ENCODE measurements at regions of chr15 and their contacts with region 1.

Region 1: DNA sequence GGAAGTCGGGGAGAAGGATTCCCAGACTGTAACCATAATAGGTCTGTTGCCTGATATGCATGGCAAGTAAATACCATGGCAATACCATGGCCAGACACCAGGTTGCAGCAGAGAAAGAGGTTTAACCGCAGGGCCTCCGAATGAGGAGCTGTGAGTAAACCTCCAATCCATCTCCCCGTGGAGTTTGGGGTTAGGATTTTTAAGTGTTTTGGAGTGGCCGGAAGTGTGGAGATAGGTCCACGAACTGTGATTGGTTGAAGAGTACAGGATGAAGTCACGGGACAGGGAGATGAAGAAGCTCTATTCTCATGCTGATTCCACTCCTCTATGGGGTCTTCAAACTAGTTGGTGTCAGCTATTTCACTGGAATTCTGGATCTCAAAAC is 127.9 kb downstream of the ST8SIA2 start:
- DNase-seq: peak; percentile 65
- H3K4me3 ChIP-seq: no peak overlapping the region
- H3K27ac ChIP-seq: no peak overlapping the region
- H3K4me1 ChIP-seq: no peaks in the 10 kb centered on the region
- H3K27me3 ChIP-seq: no peaks in the 10 kb centered on the region
- CTCF ChIP-seq: peak; percentile 91

Region 2: DNA sequence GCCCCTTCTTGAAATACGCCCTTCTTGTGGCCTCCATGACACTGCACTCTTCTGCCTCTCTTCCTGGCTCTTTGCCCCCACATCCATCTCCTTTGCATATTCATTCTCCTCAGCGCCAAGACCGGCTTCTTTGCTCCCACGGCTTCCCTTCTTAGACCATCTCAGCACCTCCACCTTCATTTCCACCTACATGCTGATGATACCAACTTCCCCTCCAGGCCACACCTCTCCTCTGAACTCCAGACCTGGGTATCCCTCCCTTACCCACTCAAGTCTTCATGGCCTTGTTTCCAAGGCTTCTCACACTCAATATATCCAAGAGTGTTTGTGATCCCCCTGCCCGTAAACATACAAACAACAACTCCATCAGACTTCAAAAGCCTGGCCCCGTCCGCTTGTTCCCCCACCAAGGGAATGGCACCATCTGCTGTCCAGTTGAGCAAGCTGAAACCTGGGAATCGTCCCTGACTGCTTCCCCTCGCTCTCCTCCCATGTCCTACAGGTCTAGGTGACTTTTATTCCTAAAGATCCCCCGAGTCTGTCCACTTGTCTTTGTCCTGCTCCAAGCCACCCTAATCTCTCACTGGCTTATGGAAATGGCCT is 161.7 kb after region 1 on chr15:
- intact Hi-C with region 1: loop called (anchors 10 kb)
- DNase-seq: peak; percentile 32
- H3K4me3 ChIP-seq: no peak overlapping the region
- H3K27ac ChIP-seq: peak overlapping the region; percentile 55
- H3K4me1 ChIP-seq: peaks cover 12% of the 10 kb centered on the region
- H3K27me3 ChIP-seq: no peaks in the 10 kb centered on the region
- CTCF ChIP-seq: peak; percentile 80

Region 3: DNA sequence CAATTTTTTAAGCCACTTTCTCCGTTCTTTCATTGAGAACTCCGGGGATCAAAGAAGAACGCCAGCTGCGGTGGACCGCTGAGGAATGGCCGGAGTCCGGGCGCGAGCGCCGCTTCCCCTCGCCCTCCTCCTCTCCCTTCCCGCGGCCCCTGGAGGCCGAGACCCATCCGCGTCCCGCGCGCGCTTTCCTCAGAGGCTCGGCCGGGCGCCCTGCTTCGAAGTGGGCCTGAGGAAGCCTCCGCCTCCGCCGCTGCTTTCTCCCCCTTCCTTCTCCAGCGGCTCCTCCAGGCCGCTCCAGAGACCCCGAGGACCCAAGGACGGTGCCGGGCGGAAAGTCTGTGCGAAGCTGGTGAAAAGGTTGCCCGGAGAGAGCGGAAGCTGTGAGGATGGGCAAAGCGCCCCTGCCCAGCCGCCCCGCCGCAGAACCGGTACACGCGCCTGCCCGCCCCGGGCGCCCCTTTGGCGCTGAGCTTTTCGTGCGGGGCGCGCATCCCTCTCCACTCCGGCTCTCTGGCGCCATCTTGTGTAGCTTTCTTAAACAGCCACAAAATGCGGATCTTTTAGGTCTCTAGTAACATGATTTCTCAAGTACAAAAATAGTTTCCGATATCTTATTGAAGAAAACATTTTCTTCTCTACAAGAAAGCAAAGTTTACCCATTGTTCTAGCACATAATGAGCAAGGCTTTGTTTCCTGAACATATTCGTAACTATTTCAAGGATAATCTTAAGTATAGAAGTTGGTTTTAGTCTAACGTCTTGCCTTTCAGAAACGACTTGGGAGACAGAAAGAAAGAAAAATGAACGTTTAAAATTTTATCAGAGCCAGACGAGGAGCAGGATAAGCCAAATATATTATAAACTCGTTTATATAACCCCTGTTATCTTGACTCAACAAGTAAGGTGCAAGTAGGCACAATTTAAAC is 193.1 kb after region 1 on chr15:
- intact Hi-C with region 1: loop called (anchors 5 kb)
- DNase-seq: peak; percentile 69
- H3K4me3 ChIP-seq: peak overlapping the region; percentile 75
- H3K27ac ChIP-seq: peak overlapping the region; percentile 80
- H3K4me1 ChIP-seq: peaks cover 11% of the 10 kb centered on the region
- H3K27me3 ChIP-seq: no peaks in the 10 kb centered on the region
- CTCF ChIP-seq: peak; percentile 94